ENCODE measurements at regions of chr17 and their contacts with region 1.

Region 1: GRCh38 chr17:996554-997344 is at the start of gene TIMM22:
- DNase-seq: peak; percentile 93
- H3K4me3 Mint-ChIP-seq: peak within 1 kb of the TSS; percentile 92
- H3K27ac Mint-ChIP-seq: peak within 1 kb of the TSS; percentile 97
- H3K4me1 Mint-ChIP-seq: peaks cover 23% of the 10 kb centered on the region
- H3K27me3 Mint-ChIP-seq: no peaks in the 10 kb centered on the region
- total RNA-seq, gene TIMM22: 8.4 to 9.2 TPM

Region 2: GRCh38 chr17:781805-782731 is 214.7 kb before region 1 on chr17 and contains the starts of genes GLOD4 and MRM3:
- CTCF ChIA-PET with region 1: interaction called, 11 read pairs
- POLR2A ChIA-PET with region 1: no interaction called
- DNase-seq: peak; percentile 94
- H3K4me3 Mint-ChIP-seq: peak within 1 kb of the TSS; percentile 97
- H3K27ac Mint-ChIP-seq: peak within 1 kb of the TSS; percentile 97
- H3K4me1 Mint-ChIP-seq: peaks cover 36% of the 10 kb centered on the region
- H3K27me3 Mint-ChIP-seq: no peaks in the 10 kb centered on the region
- total RNA-seq, gene GLOD4: 57.6 to 71.6 TPM
- total RNA-seq, gene MRM3: 16.9 to 19.6 TPM

Region 3: DNA sequence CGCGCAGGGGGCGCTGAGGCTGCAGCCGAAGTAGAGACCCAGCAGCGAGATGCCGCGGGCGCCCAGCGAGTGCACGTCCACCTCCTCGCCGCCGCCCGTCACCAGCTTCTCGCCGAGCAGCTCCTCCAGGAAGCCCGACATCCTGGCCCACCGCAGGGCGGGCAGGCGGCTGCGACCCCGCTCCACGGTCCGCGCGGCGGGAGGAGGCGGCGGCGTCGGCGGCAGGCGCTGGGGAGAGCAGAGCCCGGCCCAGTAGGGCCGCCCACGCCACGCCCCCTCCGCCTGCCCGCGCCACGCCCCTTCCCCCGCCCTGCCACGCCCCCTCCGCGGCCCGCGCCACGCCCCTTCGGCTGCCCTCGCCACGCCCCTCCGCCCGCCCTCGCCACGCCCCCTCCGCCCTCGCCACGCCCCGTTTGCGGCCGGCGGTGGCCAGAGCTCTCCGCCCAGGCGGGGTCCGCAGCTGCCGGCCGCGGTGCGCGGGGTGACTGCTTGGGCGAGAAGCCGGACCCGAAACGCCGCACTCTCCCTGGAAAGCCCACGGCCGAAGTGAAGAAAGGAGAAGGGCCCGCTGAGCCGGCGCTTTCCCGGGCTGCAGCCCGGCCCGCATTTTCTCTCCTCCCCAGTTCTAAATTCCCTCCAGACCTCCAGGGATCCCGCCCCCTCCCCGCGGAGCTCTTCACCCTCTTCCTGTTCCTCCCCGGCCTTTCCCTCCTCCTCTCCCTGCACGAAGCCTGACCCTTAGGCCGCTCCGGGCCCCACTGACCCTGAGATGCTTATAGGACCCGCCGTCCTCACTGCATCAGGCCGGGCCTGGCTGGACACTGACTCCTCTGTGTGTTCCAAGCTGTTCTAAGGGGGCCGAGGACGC is 17.0 kb before region 1 on chr17 and contains the start of gene NXN:
- CTCF ChIA-PET with region 1: interaction called, 31 read pairs
- POLR2A ChIA-PET with region 1: interaction called, 3 read pairs
- DNase-seq: peak; percentile 83
- H3K4me3 Mint-ChIP-seq: peak within 1 kb of the TSS; percentile 69
- H3K27ac Mint-ChIP-seq: peak within 1 kb of the TSS; percentile 9
- H3K4me1 Mint-ChIP-seq: peaks cover 18% of the 10 kb centered on the region
- H3K27me3 Mint-ChIP-seq: peaks cover 35% of the 10 kb centered on the region
- total RNA-seq, gene NXN: 0.22 to 0.65 TPM

Region 4: DNA sequence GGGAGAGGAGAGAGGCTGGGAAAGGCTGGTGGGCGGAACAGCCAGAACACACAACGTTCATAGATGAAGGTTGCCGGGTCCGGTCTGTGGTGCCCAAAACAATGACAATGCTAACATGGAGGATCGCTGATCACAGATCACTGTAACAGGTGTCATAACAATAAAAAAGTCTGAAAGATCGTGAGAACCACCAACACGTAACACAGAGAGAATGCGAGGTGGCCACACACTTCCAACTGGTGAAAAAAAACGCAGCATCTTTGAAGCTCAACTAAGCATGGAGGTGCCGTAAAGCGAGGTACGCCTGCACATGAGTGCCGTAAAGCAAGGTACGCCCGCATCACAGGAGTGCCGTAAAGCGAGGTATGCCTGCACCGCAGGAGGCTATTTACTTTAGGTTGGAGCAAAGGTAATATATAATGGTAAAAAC is 140.7 kb after region 1 on chr17:
- CTCF ChIA-PET with region 1: no interaction called
- POLR2A ChIA-PET with region 1: no interaction called
- DNase-seq: peak; percentile 37
- H3K4me3 Mint-ChIP-seq: no peak overlapping the region
- H3K27ac Mint-ChIP-seq: no peak overlapping the region
- H3K4me1 Mint-ChIP-seq: no peaks in the 10 kb centered on the region
- H3K27me3 Mint-ChIP-seq: peaks cover 2% of the 10 kb centered on the region

Measured in activated CD4-positive, alpha-beta T cell treated with anti-CD3 and anti-CD28 coated beads, Interleukin-2, amount 10 ng/mL, durations not matched to agents 7 days and 5 days (primary cell).